IMR-90 (cell line): ENCODE measurements at regions of chr2 and their contacts with region 1.

Region 1: GRCh38 chr2:200985799-200986198 is 22.3 kb upstream of the ORC2 start:
- DNase-seq: peak; percentile 84
- ATAC-seq: peak; percentile 80
- H3K4me3 ChIP-seq: no peak overlapping the region
- H3K27ac ChIP-seq: no peak overlapping the region
- H3K4me1 ChIP-seq: peaks cover 12% of the 10 kb centered on the region
- H3K27me3 ChIP-seq: no peaks in the 10 kb centered on the region
- CTCF ChIP-seq: no peak
- POLR2A ChIP-seq: no peak
- RAD21 ChIP-seq: no peak

Region 2: DNA sequence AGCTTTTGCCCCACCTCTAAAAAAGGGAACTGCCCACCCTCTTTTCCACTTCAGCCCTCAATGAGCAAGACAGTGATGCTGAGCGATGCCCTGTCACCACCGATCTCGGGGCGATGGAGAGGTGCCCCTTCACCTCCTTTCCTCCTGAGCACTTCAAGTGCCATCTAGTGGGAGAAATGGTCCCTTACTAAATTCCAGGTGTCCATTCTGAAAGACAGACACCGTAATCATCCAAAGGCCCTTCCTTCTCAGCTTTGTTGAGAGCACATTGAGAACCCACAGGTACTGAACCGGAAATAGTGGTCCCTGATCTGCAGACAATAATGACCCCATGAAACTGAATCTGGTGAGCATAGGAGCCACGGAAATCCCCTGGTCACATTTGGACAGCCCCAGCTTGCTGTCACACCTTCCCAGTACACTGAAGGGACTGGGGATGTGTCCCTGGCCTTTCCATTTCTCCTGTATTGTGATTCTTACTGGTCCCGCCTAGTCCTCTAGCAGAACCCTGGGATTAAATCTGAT is 514.4 kb before region 1 on chr2:
- CTCF ChIA-PET with region 1: no interaction called
- POLR2A ChIA-PET with region 1: no interaction called
- dilution Hi-C with region 1: no loop called
- in situ Hi-C with region 1: no loop called
- intact Hi-C with region 1: no loop called
- DNase-seq: no peak
- ATAC-seq: no peak
- H3K4me3 ChIP-seq: no peak overlapping the region
- H3K27ac ChIP-seq: no peak overlapping the region
- H3K4me1 ChIP-seq: no peaks in the 10 kb centered on the region; the same call in 1 of the 2 replicates
- H3K27me3 ChIP-seq: no peaks in the 10 kb centered on the region
- CTCF ChIP-seq: peak; percentile 47
- POLR2A ChIP-seq: no peak
- RAD21 ChIP-seq: peak; percentile 56

Region 3: GRCh38 chr2:200592406-200593075 is 393.3 kb before region 1 on chr2:
- CTCF ChIA-PET with region 1: no interaction called
- POLR2A ChIA-PET with region 1: no interaction called
- dilution Hi-C with region 1: no loop called
- in situ Hi-C with region 1: no loop called
- intact Hi-C with region 1: no loop called
- DNase-seq: peak; percentile 62
- ATAC-seq: peak; percentile 64
- H3K4me3 ChIP-seq: no peak overlapping the region
- H3K27ac ChIP-seq: no peak overlapping the region
- H3K4me1 ChIP-seq: no peaks in the 10 kb centered on the region
- H3K27me3 ChIP-seq: peaks cover 2% of the 10 kb centered on the region; the same call in 1 of the 2 replicates
- CTCF ChIP-seq: no peak
- POLR2A ChIP-seq: no peak
- RAD21 ChIP-seq: no peak

Region 4: DNA sequence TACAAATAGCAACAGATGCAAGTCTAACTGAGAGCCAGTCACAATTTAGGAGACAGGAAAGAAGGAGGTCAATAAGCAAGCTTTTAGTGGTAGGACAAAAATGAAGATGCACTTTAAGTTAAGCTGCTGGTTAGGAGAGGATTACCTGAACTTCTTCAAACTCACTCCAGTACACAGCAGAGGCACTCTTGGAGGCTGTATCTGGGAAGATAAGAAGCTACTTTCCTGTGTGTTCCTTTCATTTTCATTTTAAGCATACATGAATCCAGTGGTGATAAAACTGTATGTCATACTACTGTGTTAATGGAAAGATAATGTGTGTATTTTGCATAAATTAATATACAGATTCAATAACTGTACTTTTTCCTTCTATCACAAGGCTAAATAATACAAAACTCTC is 36.1 kb after region 1 on chr2:
- CTCF ChIA-PET with region 1: no interaction called
- POLR2A ChIA-PET with region 1: no interaction called
- dilution Hi-C with region 1: no loop called
- in situ Hi-C with region 1: no loop called
- intact Hi-C with region 1: loop called (anchors 5 kb)
- DNase-seq: no peak
- ATAC-seq: no peak; the same call in 1 of the 2 replicates
- H3K4me3 ChIP-seq: no peak overlapping the region
- H3K27ac ChIP-seq: no peak overlapping the region
- H3K4me1 ChIP-seq: peaks cover under 1% of the 10 kb centered on the region; the same call in 1 of the 2 replicates
- H3K27me3 ChIP-seq: no peaks in the 10 kb centered on the region
- CTCF ChIP-seq: no peak
- POLR2A ChIP-seq: no peak
- RAD21 ChIP-seq: no peak